ENCODE measurements at regions of chr3 and their contacts with region 1.

Region 1: DNA sequence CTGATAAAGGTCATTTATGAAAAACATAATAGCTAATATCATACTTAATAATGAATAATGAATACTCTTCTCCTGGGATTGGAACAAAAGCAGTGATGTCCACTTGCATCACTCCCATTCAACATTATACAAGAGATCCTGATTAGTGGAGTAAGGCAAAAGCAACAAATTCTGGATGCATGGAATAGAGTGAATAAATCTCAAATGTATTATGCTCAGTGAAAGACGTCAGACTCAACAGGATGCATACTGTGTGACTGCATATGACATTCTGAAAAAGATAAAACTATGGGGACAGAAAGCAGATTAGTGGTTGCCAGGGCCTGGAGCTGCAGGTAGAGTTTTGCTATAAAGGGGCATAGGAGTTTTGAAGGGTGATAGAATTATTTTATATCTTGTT is 77.6 kb upstream of the ZBTB20 start:
- DNase-seq: no peak
- ATAC-seq: no peak

Region 2: DNA sequence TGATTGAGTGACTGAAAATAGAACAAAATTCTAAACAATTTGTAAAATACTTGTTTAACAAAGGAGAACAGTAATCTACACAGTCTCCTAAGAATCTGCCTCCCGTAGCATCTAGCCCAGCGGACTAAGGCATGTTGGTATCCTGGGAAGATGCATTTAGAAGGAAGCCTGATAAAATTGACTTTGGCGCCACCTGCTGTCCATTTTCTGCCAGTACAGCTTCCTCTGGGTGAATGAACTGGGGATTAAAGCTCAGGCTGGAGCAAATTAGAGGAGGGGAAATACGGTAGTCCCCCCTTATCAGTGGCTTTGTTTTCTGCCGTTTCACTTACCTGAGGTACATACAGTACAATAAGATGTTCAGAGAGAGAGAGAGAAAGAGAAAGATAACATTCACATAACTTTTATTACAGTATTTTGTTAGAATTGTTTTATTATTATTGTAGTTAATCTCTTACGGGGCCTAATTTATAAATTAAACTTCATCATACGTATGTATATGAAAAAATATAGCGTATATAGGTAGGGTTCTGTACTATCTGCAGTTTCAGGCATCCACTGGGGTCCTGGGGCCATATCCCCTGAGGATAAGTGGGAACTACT is 590.2 kb after region 1 on chr3:
- intact Hi-C with region 1: loop called in 1 of 2 experiments (anchors 5 kb)
- DNase-seq: peak; percentile 31 to 74
- ATAC-seq: peak; percentile 72

Measured in left colon (tissue), 2 donors.